Activated CD4-positive, alpha-beta T cell treated with anti-CD3 and anti-CD28 coated beads, Interleukin-2, amount 10 ng/mL, durations not matched to agents 24 days and 14 days (primary cell): ENCODE measurements at regions of chr5 and their contacts with region 1.

Region 1: DNA sequence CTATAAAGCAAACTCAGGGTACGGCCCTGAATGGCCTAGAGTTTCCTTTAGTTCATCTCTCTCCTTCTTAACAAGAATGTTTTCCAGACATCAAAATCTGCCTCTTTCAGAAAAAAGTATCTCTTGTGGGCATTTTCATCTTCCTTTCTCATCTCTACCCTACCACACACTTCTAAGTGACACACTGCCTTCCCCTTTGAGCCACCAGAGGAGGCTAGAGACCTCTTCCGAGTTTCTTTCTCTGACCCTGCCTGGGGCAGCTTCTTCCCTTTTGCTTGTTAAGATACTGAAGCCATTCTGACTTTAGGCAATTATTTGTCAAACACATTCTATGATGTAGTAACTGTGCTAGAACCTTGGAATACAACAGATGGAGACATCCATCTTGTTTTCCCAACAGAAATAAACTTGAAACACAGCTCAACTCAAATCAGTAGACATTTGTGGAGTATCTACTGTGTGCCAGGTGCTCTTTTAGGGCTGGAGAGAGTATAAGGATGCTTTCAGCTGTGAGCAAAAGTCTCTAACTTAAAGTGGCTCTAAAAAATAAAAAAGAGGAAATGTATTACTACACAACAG is 8.6 kb upstream of the SV2C start:
- DNase-seq: peak; percentile 70
- H3K4me3 Mint-ChIP-seq: no peak overlapping the region
- H3K27ac Mint-ChIP-seq: no peak overlapping the region
- H3K4me1 Mint-ChIP-seq: no peaks in the 10 kb centered on the region
- H3K27me3 Mint-ChIP-seq: peaks cover 60% of the 10 kb centered on the region

Region 2: DNA sequence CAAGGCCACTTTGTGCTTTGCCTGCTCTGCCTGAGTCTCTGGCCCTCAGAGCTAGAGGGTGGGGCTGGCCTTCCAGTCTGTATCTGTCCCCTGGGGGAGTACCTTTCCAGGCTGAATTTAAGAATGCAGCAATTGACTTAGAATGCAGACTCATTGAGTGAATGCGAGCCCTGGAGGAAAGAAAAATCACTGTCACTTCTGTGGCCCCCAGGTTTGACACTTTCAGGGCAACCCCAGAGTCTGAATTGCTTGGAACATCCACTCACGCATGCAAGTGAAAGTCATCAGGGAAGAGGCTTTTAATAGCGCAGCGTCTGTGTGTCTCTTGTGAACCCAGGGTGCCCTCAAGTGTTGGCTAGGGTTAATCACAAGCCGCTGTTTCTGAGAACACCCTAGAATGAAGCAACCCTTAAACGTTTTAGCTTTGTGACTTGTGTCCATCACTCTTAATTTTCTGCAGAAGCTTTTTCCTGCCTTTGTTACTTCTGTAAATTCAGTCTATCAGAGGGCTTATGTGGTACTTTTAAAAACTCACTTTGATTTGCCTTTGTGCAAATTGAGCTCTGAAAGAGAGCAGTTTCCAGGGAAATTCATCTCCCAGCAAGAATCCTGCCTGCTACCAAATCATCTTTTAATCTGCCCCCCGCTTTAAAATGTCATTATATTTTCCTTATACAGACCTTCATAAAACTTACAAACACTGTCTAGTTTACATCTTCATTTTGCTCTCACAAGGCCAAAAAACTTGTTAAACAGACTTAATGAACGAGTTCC is 181.7 kb after region 1 on chr5:
- intact Hi-C with region 1: loop called (anchors 1 kb)
- DNase-seq: peak; percentile 89
- H3K4me3 Mint-ChIP-seq: no peak overlapping the region
- H3K27ac Mint-ChIP-seq: no peak overlapping the region
- H3K4me1 Mint-ChIP-seq: peaks cover 9% of the 10 kb centered on the region
- H3K27me3 Mint-ChIP-seq: peaks cover 34% of the 10 kb centered on the region